ENCODE measurements at regions of chr16 and their contacts with region 1.

Region 1: GRCh38 chr16:67326472-67327309 is at the starts of genes KCTD19 and LRRC36:
- DNase-seq: peak; percentile 98
- H3K4me3 ChIP-seq: peak within 1 kb of the TSS; percentile 58 to 70
- H3K27ac ChIP-seq: peak within 1 kb of the TSS in 1 of 2 experiments; percentile 29; a peak in 1 of 4 replicates
- H3K4me1 ChIP-seq: peaks cover 0 to 6% of the 10 kb centered on the region in 2 experiments; a peak in 1 of 4 replicates
- H3K27me3 ChIP-seq: no peaks in the 10 kb centered on the region
- CTCF ChIP-seq: peak; percentile 59
- EP300 ChIP-seq: no peak
- RAD21 ChIP-seq: peak; percentile 50
- polyA plus RNA-seq, gene KCTD19: 1.8 and 1.9 TPM in 2 replicates
- polyA plus RNA-seq, gene LRRC36: 0.78 and 0.92 TPM in 2 replicates

Region 2: DNA sequence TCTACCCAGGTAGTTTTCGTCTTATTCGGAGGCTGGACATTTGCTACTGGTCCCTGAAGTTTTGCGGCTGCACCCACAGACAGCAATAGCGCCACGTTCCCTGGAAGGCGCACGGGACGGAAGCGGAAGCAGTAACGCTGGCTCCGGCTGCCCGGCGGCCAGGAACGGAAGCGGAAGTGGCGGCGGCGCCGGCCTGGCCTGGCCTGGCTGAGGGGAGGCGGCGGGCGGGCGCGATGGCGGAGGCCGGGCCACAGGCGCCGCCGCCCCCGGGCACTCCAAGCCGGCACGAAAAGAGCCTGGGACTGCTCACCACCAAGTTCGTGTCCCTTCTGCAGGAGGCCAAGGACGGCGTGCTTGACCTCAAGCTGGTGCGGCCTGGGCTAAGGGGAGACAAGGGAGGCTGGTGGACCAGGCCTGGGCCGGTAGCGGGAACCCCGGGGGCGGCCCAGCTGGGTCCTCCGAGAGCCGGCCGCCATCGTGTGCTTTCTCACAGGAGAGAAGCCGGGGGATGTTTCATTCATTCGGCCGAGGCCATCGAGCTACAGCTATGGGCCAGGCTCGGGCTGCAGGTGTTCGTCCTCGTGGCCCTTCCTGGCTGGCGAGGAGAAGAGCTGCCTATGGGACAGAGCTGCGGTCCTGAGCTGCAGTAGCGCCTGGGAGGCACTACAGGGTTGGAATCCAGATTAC is 134.6 kb before region 1 on chr16 and contains the start of gene E2F4:
- CTCF ChIA-PET with region 1: no interaction called
- POLR2A ChIA-PET with region 1: no interaction called
- DNase-seq: peak; percentile 97
- H3K4me3 ChIP-seq: peak within 1 kb of the TSS; percentile 96 to 99
- H3K27ac ChIP-seq: peak within 1 kb of the TSS; percentile 76 to 80
- H3K4me1 ChIP-seq: peaks cover 9 to 25% of the 10 kb centered on the region in 2 experiments; a peak in 3 of 4 replicates
- H3K27me3 ChIP-seq: no peaks in the 10 kb centered on the region
- CTCF ChIP-seq: no peak
- EP300 ChIP-seq: 0 out of 4 replicates have a peak, but pooled peaks of 1 of the 2 experiments have one; percentile 10
- RAD21 ChIP-seq: no peak
- polyA plus RNA-seq, gene E2F4: 168 and 210 TPM in 2 replicates

Region 3: DNA sequence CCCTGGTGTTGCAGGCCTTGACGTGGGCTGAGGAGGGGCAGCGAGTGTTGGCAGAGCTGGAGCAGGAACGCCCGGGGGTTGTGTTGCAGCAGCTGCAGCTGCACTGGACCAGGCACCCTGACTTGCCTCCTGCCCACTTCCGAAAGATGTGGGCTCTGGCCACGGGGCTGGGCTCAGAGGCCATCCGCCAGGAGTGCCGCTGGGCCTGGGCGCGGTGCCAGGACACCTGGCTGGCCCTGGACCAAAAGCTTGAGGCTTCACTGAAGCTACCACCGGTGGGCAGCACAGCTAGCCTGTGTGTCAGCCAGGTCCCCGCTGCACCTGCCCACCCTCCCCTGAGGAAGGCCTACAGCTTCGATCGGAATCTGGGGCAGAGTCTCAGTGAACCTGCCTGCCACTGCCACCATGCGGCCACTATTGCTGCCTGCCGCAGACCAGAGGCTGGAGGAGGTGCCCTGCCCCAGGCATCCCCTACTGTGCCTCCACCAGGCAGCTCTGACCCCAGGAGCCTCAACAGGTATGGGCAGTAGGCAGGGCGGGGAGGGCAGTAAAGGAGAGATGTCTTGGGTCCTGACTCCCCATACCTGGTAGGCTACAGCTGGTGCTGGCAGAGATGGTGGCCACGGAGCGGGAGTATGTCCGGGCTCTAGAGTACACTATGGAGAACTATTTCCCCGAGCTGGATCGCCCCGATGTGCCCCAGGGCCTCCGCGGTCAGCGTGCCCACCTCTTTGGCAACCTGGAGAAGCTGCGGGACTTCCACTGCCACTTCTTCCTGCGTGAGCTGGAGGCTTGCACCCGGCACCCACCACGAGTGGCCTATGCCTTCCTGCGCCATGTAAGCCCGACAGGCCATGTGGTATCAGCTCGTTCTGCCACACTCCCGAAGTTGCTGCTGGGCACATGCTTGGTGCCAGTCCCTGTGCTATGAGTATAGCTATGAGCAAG is 41.7 kb before region 1 on chr16:
- CTCF ChIA-PET with region 1: interaction called, 18 read pairs
- POLR2A ChIA-PET with region 1: no interaction called
- DNase-seq: peak; percentile 69
- H3K4me3 ChIP-seq: no peak overlapping the region
- H3K27ac ChIP-seq: peak overlapping the region in 1 of 2 experiments; percentile 48; a peak in 1 of 4 replicates
- H3K4me1 ChIP-seq: peaks cover 2 to 30% of the 10 kb centered on the region in 2 experiments; a peak in 2 of 4 replicates
- H3K27me3 ChIP-seq: no peaks in the 10 kb centered on the region
- CTCF ChIP-seq: peak; percentile 34
- EP300 ChIP-seq: no peak
- RAD21 ChIP-seq: peak; percentile 31; the same call in 1 of the 2 replicates

Region 4: DNA sequence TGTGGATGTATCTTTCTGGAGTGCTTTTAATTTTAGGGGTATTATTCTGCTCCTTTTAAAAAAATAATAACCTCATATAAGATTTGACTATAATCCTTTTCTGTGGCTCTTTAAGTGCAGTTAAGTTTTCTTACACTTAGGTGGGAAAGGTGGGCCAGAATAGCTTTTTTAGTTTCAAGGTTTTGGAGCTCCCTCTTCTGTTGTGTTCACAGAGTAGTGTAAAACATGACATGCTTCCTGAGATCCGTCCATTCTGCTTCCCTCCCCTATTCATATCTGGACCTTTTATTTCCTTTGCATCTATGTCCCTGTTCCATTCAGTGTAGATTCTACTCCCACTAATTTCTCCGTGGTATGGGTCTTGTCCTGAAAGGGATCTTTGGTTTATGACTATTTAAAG is 12.8 kb after region 1 on chr16:
- CTCF ChIA-PET with region 1: interaction called, 26 read pairs
- POLR2A ChIA-PET with region 1: no interaction called
- DNase-seq: no peak
- H3K4me3 ChIP-seq: no peak overlapping the region
- H3K27ac ChIP-seq: no peak overlapping the region
- H3K4me1 ChIP-seq: no peaks in the 10 kb centered on the region
- H3K27me3 ChIP-seq: no peaks in the 10 kb centered on the region
- CTCF ChIP-seq: peak; percentile 51
- EP300 ChIP-seq: no peak
- RAD21 ChIP-seq: peak; percentile 60

Region 5: DNA sequence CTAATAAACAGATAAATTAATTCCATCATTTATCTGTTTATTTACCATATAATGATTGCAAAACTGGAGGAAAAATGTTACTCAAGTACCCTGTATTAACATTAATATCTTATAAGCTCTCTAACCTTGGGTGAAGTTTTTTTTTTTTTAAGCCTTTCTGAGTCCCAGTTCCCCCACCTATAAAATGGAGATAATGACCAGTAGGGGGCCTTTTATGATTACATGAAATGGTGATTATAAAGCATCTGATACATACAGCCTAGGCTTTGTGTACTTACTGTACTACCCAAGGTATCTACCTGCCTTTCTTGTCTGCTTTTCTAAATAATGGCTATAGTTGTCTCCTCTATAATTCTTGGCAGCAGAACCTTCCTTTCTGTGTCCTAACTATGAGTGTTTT is 22.5 kb after region 1 on chr16:
- CTCF ChIA-PET with region 1: interaction called, 19 read pairs
- POLR2A ChIA-PET with region 1: no interaction called
- DNase-seq: peak; percentile 33
- H3K4me3 ChIP-seq: no peak overlapping the region
- H3K27ac ChIP-seq: no peak overlapping the region
- H3K4me1 ChIP-seq: no peaks in the 10 kb centered on the region
- H3K27me3 ChIP-seq: no peaks in the 10 kb centered on the region
- CTCF ChIP-seq: peak; percentile 70
- EP300 ChIP-seq: no peak
- RAD21 ChIP-seq: peak; percentile 45

Region 6: DNA sequence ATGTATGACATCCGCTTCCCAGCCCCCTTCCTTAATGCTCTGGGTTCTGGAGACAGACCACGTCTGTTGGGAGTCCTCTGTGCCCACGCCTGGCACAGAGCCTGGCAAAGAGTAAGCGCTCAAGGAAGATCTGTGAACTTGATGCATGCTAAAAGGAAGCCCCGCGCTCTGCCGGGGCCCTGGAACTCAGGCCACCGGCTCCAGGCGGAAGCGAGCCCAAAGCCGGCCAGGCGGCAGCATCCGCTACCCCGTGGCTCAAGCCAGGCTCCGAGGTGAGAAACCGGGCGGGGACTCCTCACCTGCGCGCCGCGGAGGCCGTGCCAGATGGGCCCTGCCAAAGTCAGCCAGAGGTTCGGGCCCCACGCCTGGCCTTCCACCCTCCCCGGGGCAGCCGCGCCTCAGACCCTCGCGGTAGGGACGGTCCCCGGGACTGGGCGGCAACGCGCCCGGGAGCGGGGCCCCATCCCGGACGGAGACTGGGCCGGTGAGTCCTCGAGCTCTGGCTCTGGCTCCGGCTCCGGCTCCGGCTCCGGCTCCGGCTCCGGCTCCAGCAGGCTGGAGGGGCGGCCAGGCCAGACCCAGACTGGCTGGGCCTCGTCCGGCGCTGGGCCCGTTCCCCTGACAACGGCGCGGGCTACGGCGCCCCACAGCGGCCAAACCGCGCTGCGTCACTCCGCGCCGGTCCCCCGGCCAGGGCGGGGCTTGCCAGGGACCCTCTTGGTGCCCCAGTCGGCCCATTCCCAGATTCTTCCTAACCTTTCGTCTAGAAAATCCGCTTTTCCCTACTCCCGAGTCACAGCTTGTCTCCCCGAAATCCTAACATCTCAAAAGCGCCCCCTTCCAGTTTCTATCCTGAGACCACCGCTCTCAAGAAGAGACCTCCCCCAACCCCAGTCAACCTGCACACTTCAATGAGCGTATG is 89.4 kb after region 1 on chr16 and contains the start of gene ZDHHC1:
- CTCF ChIA-PET with region 1: interaction called, 25 read pairs
- POLR2A ChIA-PET with region 1: no interaction called
- DNase-seq: peak; percentile 96
- H3K4me3 ChIP-seq: peak within 1 kb of the TSS; percentile 64 to 66
- H3K27ac ChIP-seq: peak within 1 kb of the TSS; percentile 53 to 79
- H3K4me1 ChIP-seq: no peaks in the 10 kb centered on the region; a peak in 1 of 4 replicates
- H3K27me3 ChIP-seq: no peaks in the 10 kb centered on the region
- CTCF ChIP-seq: peak; percentile 56
- EP300 ChIP-seq: no peak
- RAD21 ChIP-seq: peak; percentile 70
- polyA plus RNA-seq, gene ZDHHC1: 14.2 and 15.8 TPM in 2 replicates